ENCODE measurements at regions of chr1 and their contacts with region 1.

Region 1: GRCh38 chr1:103514920-103515503 is 10.5 kb upstream of the RNPC3 start:
- DNase-seq: peak; percentile 66
- H3K4me3 ChIP-seq: no peak overlapping the region
- H3K27ac ChIP-seq: no peak overlapping the region
- H3K4me1 ChIP-seq: peaks cover 11% of the 10 kb centered on the region
- H3K27me3 ChIP-seq: no peaks in the 10 kb centered on the region
- CTCF ChIP-seq: peak; percentile 37 to 45
- POLR2A ChIP-seq: no peak

Region 2: GRCh38 chr1:101769520-101769919 is 1745.5 kb before region 1 on chr1:
- CTCF ChIA-PET with region 1: no interaction called
- POLR2A ChIA-PET with region 1: no interaction called
- dilution Hi-C with region 1: no loop called
- intact Hi-C with region 1: loop called (anchors 5 kb)
- DNase-seq: peak; percentile 32
- H3K4me3 ChIP-seq: no peak overlapping the region
- H3K27ac ChIP-seq: no peak overlapping the region
- H3K4me1 ChIP-seq: no peaks in the 10 kb centered on the region
- H3K27me3 ChIP-seq: peaks cover 0 to 3% of the 10 kb centered on the region in 2 experiments
- CTCF ChIP-seq: peak; percentile 27 to 40
- POLR2A ChIP-seq: no peak

Region 3: GRCh38 chr1:103416681-103417318 is 98.2 kb before region 1 on chr1:
- CTCF ChIA-PET with region 1: no interaction called
- POLR2A ChIA-PET with region 1: no interaction called
- dilution Hi-C with region 1: no loop called
- intact Hi-C with region 1: no loop called
- DNase-seq: no peak
- H3K4me3 ChIP-seq: no peak overlapping the region
- H3K27ac ChIP-seq: no peak overlapping the region
- H3K4me1 ChIP-seq: no peaks in the 10 kb centered on the region
- H3K27me3 ChIP-seq: no peaks in the 10 kb centered on the region
- CTCF ChIP-seq: no peak
- POLR2A ChIP-seq: no peak

Measured in endothelial cell of umbilical vein (primary cell).